ENCODE measurements at regions of chr17 and their contacts with region 1.

Region 1: GRCh38 chr17:17698869-17699351 is 17.7 kb downstream of the RAI1 start:
- DNase-seq: no peak
- H3K4me3 ChIP-seq: no peak overlapping the region
- H3K27ac ChIP-seq: peak overlapping the region; percentile 97
- H3K4me1 ChIP-seq: peaks cover 94% of the 10 kb centered on the region
- H3K27me3 ChIP-seq: no peaks in the 10 kb centered on the region
- CTCF ChIP-seq: no peak
- POLR2A ChIP-seq: no peak

Region 2: DNA sequence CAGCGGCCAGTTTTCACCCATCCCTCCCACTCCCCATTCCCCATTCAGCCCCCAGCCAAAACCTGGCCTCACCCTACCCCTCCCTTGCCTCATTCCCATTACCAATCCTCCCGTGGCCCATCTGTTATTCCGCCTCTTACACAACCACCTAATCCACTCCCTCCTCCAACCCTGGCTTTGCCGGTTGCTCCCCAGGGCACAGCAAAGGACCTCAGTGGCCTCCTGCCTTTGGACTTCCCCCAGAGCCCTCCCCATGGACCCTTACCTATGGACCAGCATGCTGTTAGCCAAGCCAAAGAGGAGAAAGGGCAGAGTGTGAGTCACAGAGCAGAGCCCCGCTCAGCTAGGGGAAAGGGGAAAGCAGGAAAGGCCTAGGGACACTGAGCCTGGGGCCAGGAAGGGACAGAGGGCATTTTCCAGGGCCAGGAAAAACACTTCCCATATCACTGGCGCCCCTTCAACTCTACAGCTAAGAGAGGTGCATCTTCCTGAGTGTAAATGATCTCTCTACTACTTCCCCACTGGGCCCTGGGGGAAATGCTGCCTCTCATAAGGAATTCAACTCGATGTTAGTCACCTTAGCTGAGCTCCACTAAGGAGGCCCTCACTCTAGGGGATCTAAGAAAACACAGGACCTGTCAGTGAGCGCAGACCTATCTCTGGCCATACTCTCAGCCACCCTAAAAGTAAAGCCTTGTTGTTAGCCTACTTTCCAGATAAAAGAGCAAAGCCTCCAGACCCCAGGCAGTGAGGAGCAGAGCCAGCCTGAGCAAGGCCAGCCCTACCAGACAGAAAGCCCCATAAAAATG is 118.0 kb before region 1 on chr17:
- intact Hi-C with region 1: no loop called
- DNase-seq: no peak
- H3K4me3 ChIP-seq: no peak overlapping the region
- H3K27ac ChIP-seq: no peak overlapping the region
- H3K4me1 ChIP-seq: peaks cover 14% of the 10 kb centered on the region
- H3K27me3 ChIP-seq: no peaks in the 10 kb centered on the region
- CTCF ChIP-seq: no peak
- POLR2A ChIP-seq: no peak

Region 3: DNA sequence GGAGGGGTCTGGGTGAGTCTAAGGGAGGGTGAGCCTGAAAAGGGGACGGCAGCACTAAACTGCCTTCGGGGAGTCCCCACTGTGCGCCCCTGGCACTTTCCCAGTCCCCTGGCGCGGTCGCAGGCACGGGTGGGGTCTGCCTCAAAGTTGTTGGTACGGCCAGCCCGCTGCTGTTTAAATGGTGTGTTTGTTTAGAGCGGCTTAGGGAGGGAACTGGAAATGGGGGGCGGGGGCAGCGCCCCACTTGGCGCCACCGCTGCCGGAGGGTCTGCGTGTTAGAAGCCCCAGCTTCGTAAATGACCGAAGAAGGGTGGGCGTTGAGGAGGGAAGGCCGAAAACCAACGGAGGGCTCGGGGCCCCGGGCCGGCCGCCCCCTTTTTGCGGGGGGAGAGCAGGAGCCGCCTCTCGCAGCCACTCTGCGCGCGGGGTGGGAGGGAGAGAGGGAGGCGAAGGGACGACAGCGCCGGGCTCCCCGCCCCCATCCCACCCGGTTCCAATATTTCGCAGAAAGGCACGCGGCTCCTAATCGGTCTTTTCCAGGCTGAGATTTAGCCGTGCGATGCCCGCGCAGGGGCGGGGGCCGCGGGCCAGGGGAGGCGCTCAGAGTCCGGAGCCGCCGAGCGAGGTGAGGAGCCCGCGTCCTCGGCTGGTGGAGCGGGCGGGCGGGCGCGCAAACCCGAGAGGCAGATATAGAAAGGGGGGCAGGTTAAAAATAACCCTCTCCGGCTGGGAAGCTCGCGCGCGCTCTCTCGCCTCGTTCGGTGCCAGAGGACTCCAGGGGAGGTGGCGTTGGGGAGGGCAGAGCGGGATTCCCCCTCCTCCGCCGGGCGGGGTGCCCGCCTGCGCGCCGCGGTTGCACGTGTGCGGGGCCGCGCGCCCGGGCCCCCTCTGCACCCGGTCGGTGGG is 82.9 kb after region 1 on chr17:
- intact Hi-C with region 1: loop called (anchors 2 kb)
- DNase-seq: no peak
- H3K4me3 ChIP-seq: peak overlapping the region; percentile 52 to 55
- H3K27ac ChIP-seq: peak overlapping the region; percentile 97
- H3K4me1 ChIP-seq: peaks cover 72% of the 10 kb centered on the region
- H3K27me3 ChIP-seq: no peaks in the 10 kb centered on the region
- CTCF ChIP-seq: no peak
- POLR2A ChIP-seq: no peak